PC-9 (cell line): ENCODE measurements at regions of chr1 and their contacts with region 1.

Region 1: DNA sequence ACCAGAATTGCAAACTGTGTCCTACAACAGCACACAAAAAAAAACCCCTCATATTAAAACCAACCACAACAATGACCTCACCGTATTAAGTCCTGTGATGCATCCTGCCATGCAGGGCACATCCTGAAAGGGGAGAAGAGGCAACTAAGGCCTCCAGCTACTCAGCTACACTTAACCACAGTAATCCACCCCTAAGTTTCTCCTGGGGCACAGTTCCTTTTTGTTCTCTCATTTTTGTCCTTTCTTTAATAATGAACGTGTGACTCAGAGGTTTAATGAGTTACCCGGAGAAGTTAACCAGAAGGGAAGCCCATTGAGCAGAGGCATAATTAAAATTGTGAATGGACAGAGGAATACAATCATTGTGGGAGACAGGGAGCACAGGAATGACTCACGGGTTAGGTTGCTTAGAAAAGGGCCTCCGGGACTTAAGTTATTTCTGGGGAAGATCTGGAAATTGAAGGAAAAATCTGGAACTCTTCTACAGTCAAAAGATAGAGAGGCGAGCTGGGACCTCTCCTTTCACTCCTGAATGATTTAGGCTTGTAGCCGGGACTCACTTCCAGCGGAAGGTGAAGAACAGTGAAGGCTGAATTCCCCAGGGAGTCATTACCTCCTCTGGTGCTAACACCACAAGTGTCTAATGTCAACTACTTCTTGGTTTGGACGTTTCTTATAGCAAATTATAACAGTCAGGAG is 36.9 kb upstream of the HIVEP3 start:
- DNase-seq: peak; percentile 67 to 96
- H3K4me3 ChIP-seq: peak overlapping the region; percentile 9; the same call in 1 of the 2 replicates
- H3K27ac ChIP-seq: peak overlapping the region; percentile 89
- H3K4me1 ChIP-seq: peaks cover 62% of the 10 kb centered on the region
- H3K27me3 ChIP-seq: no peaks in the 10 kb centered on the region
- CTCF ChIP-seq: no peak

Region 2: DNA sequence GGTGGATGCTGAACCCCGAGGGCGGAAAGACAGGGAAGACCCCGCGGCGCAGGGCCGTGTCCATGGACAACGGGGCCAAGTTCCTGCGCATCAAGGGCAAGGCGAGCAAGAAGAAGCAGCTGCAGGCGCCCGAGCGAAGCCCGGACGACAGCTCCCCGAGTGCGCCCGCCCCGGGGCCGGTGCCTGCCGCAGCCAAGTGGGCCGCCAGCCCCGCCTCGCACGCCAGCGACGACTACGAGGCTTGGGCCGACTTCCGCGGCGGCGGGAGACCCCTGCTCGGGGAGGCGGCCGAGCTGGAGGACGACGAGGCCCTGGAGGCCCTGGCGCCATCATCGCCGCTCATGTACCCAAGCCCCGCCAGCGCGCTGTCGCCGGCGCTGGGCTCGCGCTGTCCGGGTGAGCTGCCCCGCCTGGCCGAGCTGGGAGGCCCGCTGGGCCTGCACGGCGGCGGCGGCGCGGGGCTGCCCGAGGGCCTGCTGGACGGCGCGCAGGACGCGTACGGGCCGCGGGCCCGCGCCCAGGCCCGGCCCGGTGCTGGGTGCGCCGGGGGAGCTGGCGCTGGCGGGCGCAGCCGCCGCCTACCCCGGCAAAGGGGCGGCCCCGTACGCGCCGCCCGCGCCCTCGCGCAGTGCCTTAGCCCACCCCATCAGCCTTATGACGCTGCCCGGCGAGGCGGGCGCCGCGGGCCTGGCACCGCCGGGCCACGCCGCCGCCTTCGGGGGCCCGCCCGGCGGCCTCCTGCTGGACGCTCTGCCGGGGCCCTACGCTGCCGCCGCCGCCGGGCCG is 573.7 kb before region 1 on chr1:
- CTCF ChIA-PET with region 1: no interaction called
- POLR2A ChIA-PET with region 1: interaction called, 19 read pairs
- intact Hi-C with region 1: no loop called
- DNase-seq: peak in 1 of 2 experiments; percentile 81
- H3K4me3 ChIP-seq: peak overlapping the region; percentile 91
- H3K27ac ChIP-seq: peak overlapping the region; percentile 82
- H3K4me1 ChIP-seq: peaks cover 28% of the 10 kb centered on the region
- H3K27me3 ChIP-seq: no peaks in the 10 kb centered on the region
- CTCF ChIP-seq: no peak

Region 3: DNA sequence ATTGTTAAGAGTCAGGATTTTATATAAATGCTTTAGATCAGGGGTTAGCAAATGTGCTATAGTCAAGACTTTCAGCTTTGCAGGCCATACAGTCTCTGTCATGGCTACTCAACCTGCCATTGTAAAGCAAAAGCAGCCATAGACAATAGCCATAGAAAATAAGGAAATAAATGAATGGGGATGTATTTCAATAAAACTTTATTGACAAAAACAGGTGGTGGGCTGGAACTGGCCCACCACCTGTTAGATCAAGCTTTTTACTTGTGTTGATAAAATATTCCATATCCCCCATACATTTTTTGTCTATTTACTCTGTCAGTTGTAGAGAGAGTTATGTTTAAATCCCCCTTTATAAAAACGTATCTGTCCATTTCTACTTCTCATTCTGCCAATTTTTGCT is 135.8 kb before region 1 on chr1:
- CTCF ChIA-PET with region 1: no interaction called
- POLR2A ChIA-PET with region 1: interaction called, 10 read pairs
- intact Hi-C with region 1: no loop called
- DNase-seq: no peak
- H3K4me3 ChIP-seq: no peak overlapping the region
- H3K27ac ChIP-seq: no peak overlapping the region
- H3K4me1 ChIP-seq: peaks cover 11% of the 10 kb centered on the region; the same call in 1 of the 2 replicates
- H3K27me3 ChIP-seq: no peaks in the 10 kb centered on the region
- CTCF ChIP-seq: no peak

Region 4: GRCh38 chr1:41846625-41847405 is 108.8 kb before region 1 on chr1:
- CTCF ChIA-PET with region 1: no interaction called
- POLR2A ChIA-PET with region 1: no interaction called
- intact Hi-C with region 1: no loop called
- DNase-seq: no peak
- H3K4me3 ChIP-seq: no peak overlapping the region
- H3K27ac ChIP-seq: no peak overlapping the region
- H3K4me1 ChIP-seq: peaks cover 76% of the 10 kb centered on the region
- H3K27me3 ChIP-seq: no peaks in the 10 kb centered on the region
- CTCF ChIP-seq: no peak

Region 5: GRCh38 chr1:41862384-41863174 is 93.0 kb before region 1 on chr1:
- CTCF ChIA-PET with region 1: no interaction called
- POLR2A ChIA-PET with region 1: no interaction called
- intact Hi-C with region 1: loop called (anchors 2 kb)
- DNase-seq: peak; percentile 74 to 95
- H3K4me3 ChIP-seq: 0 out of 2 replicates have a peak overlapping the region, but pooled peaks have one; percentile 1
- H3K27ac ChIP-seq: peak overlapping the region; percentile 75
- H3K4me1 ChIP-seq: peaks cover 65% of the 10 kb centered on the region
- H3K27me3 ChIP-seq: no peaks in the 10 kb centered on the region
- CTCF ChIP-seq: no peak

Region 6: DNA sequence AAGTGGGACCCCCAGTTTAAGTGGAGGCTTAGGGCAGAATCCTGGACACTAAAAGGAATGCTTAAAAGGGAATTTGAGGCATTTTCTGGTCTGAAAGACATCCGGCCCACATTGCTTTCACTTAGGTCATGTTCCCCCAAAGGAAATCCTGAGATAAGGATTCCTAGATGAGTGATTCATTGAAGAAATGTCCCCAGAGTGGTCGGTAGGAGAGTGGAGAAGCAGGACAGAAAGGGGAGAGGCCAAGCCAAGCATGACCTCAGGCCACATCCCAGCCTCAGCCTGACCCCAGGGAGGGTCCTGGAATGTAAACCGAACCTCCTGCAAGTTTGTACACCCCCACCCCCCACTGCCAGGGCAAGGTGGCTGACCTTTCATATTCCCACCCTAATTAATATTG is 53.5 kb before region 1 on chr1:
- CTCF ChIA-PET with region 1: no interaction called
- POLR2A ChIA-PET with region 1: interaction called, 7 read pairs
- intact Hi-C with region 1: loop called (anchors 1 kb)
- DNase-seq: peak; percentile 87 to 91
- H3K4me3 ChIP-seq: peak overlapping the region; percentile 52; the same call in 1 of the 2 replicates
- H3K27ac ChIP-seq: peak overlapping the region; percentile 95
- H3K4me1 ChIP-seq: peaks cover 56% of the 10 kb centered on the region
- H3K27me3 ChIP-seq: no peaks in the 10 kb centered on the region
- CTCF ChIP-seq: no peak

Region 7: DNA sequence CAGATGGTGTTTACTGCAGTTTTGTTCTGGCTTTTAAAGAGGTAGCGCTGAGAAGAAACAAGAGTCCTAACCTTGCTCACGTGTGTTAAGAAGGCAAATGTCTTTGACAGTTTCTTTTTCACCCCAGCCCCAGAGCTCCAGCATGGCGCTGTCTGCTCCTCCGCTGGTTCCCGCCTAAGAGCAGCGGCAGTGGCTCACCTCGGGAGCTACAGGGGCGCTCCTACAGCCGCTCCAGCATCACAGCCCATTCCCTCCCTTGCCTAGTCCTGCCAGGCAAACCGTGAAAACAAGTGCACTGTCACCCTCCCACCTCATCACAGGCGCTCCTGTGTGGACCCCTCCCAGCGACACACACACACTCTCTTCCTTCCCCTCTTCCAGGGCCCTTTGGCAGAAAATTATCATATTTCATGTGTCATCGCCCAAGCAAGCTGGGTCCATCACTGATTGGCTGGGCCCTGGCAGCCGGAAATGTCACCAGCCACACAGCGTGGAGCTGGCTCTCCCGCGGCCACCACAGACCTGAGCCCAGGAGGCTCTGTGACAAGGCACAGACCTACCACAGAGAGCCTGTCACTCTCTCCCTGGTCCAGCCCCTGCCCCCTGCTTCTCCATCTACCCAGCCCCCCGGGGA is 35.7 kb before region 1 on chr1:
- CTCF ChIA-PET with region 1: interaction called, 4 read pairs
- POLR2A ChIA-PET with region 1: no interaction called
- intact Hi-C with region 1: loop called (anchors 2 kb)
- DNase-seq: peak; percentile 83
- H3K4me3 ChIP-seq: peak overlapping the region; percentile 87
- H3K27ac ChIP-seq: peak overlapping the region; percentile 75
- H3K4me1 ChIP-seq: peaks cover 57% of the 10 kb centered on the region
- H3K27me3 ChIP-seq: no peaks in the 10 kb centered on the region
- CTCF ChIP-seq: no peak

Region 8: DNA sequence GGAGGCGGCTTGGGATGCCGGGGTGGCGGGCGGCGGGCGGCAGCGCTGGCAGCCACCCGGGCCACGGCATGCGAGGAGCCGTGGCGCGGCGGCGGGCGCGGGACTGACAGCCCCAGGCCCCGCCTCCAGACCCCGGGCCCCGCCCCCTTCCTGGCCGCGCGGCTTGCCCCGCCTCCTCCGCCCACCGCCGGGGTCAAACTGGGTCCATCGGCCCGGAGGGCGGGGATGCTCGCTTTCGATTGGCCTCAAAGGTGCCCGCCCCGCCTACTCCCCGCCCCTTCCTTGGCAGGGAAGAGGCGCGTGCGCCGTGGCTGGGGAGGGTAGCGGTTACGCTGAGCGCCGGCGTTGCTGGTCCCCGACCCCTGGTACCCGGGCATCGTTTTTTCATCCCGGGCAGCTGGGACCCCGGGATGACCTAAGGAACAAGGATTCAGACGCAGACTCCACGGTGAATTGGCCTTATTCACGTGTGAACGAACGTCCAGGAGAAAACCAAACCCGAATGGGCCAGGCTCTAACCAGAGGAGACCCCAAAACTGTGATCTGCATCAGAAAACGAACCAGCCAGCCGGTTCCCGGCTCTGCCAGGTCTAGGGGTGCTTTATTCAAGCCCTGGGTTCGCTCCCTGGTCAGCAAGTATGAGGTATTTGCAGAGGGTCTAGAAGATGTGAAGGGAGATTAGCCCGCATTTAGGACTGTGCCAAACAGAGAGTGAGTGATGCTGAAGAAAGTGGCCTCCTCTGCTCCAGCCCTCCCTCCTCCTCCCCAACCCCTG is 80.4 kb after region 1 on chr1:
- CTCF ChIA-PET with region 1: no interaction called
- POLR2A ChIA-PET with region 1: no interaction called
- intact Hi-C with region 1: loop called (anchors 1 kb)
- DNase-seq: peak; percentile 78 to 99
- H3K4me3 ChIP-seq: peak overlapping the region; percentile 86
- H3K27ac ChIP-seq: no peak overlapping the region
- H3K4me1 ChIP-seq: peaks cover 18% of the 10 kb centered on the region
- H3K27me3 ChIP-seq: no peaks in the 10 kb centered on the region
- CTCF ChIP-seq: no peak